ENCODE measurements at regions of chr1 and their contacts with region 1.

Region 1: GRCh38 chr1:153922972-153923925 is at the start of gene GATAD2B:
- DNase-seq: peak; percentile 98 to 100
- ATAC-seq: peak; percentile 91 to 98
- H3K4me3 ChIP-seq: peak within 1 kb of the TSS; percentile 80
- H3K27ac ChIP-seq: peak within 1 kb of the TSS; percentile 88 to 98
- H3K4me1 ChIP-seq: peaks cover 24% of the 10 kb centered on the region
- CTCF ChIP-seq: no peak
- EP300 ChIP-seq: no peak
- POLR2A ChIP-seq: peak; percentile 64; the same call in 1 of the 2 replicates
- RAD21 ChIP-seq: no peak; a peak in 1 of 5 replicates
- polyA plus RNA-seq, gene GATAD2B: 4.9 and 11.5 TPM in 2 replicates

Region 2: DNA sequence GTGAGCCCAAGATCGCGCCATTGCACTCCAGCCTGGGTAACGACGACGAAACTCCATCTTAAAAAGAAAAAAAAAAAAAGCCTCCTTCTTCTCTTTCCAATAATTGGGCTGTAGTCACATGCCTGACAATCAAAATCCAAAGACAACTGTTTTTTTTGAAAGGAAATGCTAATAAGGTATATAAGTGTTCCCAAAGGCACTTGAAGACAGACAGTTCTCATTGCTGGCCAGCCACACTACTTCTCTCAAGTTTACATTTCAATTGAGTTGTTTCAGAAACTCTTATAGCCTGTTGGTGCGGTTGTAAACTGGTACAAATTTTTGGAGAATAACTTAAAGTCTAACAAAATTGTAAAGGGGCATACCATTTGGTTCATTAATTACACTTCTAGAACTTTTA is 23.7 kb before region 1 on chr1:
- CTCF ChIA-PET with region 1: interaction called, 15 read pairs
- POLR2A ChIA-PET with region 1: no interaction called
- DNase-seq: no peak
- ATAC-seq: no peak
- H3K4me3 ChIP-seq: no peak overlapping the region
- H3K27ac ChIP-seq: no peak overlapping the region
- H3K4me1 ChIP-seq: peaks cover 13% of the 10 kb centered on the region; the same call in 2 of the 3 replicates
- CTCF ChIP-seq: no peak
- EP300 ChIP-seq: no peak
- POLR2A ChIP-seq: no peak
- RAD21 ChIP-seq: no peak

Region 3: GRCh38 chr1:153967082-153968000 is 44.1 kb after region 1 on chr1 and contains the start of gene CREB3L4:
- CTCF ChIA-PET with region 1: interaction called, 4 read pairs
- POLR2A ChIA-PET with region 1: interaction called, 12 read pairs
- DNase-seq: peak; percentile 92 to 99
- ATAC-seq: peak; percentile 79 to 89
- H3K4me3 ChIP-seq: peak within 1 kb of the TSS; percentile 64
- H3K27ac ChIP-seq: peak within 1 kb of the TSS; percentile 90 to 92
- H3K4me1 ChIP-seq: peaks cover 19% of the 10 kb centered on the region
- CTCF ChIP-seq: peak; percentile 29; the same call in 1 of the 3 replicates
- EP300 ChIP-seq: no peak
- POLR2A ChIP-seq: peak; percentile 87
- RAD21 ChIP-seq: no peak; a peak in 1 of 5 replicates
- polyA plus RNA-seq, gene CREB3L4: 14.3 and 18.0 TPM in 2 replicates